ENCODE measurements at regions of chr1 and their contacts with region 1.

Region 1: DNA sequence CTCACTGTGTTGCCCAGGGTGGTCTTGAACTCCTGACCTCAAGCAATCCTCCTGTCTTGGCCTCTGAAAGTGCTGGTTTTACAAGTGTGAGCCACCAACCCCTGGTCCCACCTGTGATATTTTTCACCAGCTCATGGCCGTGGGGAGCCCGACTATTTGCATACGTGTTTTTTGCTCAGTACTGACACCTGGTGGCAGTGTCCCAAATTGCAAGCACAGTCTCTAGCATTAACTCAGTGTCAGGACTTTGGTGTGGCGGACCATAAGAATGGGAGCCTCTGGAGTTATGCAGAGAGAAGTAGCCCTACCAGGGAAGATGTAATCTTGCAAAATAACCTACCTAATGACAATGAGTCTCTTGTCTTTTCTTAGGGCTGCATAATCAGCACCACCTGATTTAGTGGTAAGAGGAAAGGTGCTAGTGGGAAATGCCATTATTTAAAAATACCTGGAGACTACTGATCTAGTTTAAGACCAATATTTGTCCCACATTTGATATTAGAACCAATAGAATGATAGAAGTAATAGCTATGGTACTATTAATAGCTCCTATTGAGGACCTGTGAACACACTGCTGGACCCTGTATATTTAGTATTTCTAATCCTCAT is 305.4 kb downstream of the DISC1 start:
- DNase-seq: no peak

Region 2: DNA sequence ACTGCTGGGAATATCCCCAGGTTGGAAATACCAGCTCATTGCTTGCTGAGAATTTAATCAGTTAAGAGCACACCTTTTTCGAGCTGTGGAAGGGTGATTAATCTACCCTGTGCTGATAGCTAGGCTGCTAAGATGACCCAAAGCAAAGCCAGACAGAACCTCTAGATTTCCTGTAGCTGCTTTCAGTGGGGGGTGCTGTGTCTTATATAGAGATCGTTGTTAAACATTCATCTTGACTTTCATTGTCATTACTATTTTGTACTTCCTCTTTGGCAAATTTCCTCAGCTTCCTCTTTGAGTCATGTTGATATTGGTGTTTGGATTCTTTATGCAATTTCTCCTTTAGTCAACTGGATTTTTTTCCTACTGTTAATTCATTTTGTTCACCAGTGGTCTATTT is 150.1 kb before region 1 on chr1:
- intact Hi-C with region 1: no loop called
- DNase-seq: no peak

Region 3: DNA sequence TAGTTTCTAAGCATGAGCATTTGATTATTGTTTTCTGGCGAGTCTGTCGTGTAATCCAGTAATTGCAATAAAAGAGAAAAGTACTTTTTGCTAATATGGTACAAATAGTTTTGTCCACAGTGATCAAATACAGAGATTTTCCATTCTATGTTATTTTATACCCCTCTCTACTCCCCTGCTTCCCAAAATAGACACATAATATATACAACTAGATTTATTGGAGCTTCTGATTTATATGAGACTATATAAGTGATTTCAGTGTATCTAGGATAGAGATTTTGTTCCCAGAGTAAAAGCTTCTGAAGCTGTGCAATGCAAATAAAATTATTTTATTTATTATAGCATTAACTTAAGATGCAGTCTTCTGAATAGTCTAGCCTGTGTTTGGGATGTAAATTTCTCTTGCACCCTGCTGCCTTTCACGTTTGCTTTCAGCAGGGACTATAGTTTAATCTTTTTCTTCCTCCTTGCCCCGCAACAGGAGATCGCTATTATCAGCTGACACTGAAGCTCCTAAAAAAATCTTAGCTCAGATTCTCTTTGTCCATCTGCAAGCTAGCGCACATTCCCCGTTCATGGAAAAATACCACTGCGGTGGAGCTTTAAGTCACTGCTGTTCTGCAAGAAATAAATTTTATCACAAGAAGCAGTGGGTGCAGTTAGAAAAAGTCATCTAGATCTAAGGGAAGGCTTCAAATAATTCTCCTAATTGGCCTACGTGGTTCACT is 32.1 kb before region 1 on chr1:
- intact Hi-C with region 1: no loop called
- DNase-seq: no peak

Region 4: DNA sequence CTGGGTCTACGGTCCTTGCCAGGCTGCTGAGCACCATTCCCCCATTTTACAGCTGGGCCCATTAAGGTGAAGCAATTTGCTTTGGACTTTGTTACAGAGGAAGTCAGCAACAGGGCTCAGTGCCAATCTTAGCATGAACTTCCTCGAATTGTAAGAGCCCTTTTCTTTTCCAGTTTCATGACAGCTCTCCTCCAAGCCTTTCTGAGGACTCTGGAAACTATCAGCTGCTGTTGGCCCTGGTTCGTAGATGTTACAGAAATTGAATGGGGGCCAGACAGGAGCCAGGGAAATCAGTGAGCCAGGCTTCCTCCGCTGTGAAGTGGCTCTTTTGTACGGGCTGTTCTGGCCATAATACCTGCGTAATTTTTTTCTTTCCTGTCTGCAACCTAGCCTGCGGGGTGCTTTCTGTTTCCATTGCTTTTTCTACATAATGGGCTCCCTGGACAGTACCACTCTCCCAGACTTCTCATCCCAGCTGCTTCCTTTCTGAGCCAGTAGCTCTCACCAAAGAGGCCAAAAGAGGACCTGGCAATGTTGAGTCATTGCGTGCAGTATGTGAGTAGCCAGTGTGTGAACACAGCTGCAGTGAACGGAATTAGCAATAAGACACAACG is 80.9 kb after region 1 on chr1:
- intact Hi-C with region 1: loop called (anchors 5 kb)
- DNase-seq: no peak

Region 5: GRCh38 chr1:232142403-232143314 is 210.7 kb after region 1 on chr1:
- intact Hi-C with region 1: loop called (anchors 5 kb)
- DNase-seq: peak; percentile 76

Region 6: GRCh38 chr1:232306269-232306961 is 374.5 kb after region 1 on chr1:
- intact Hi-C with region 1: loop called (anchors 5 kb)
- DNase-seq: peak; percentile 84

Region 7: DNA sequence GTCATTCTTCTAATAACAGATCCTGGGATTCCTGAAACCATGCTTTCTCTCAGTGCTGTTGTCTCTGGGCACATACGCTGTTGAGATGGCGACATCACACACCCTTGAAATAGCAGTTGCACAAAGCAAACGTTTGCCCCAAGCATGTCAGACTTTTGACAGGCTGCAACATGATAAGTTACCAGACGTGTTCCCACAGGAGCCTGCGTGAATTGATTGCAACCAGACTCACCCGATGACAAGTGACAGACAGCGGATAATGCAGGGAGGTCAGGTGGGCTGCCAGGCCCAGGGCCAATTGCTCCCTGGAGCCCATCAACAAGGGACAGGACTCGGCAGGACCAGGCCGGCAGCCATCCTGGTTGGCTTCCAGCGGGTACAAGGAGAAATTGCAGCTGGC is 387.1 kb after region 1 on chr1:
- intact Hi-C with region 1: loop called (anchors 5 kb)
- DNase-seq: peak; percentile 91